ENCODE measurements at regions of chr18 and their contacts with region 1.

Region 1: GRCh38 chr18:3806656-3807055 is 356.7 kb downstream of the TGIF1 start:
- DNase-seq: no peak
- ATAC-seq: no peak
- H3K4me3 ChIP-seq: no peak overlapping the region
- H3K4me3 Mint-ChIP-seq: no peak overlapping the region
- H3K27ac ChIP-seq: no peak overlapping the region
- H3K27ac Mint-ChIP-seq: no peak overlapping the region
- H3K4me1 ChIP-seq: no peaks in the 10 kb centered on the region
- H3K4me1 Mint-ChIP-seq: no peaks in the 10 kb centered on the region
- H3K27me3 ChIP-seq: no peaks in the 10 kb centered on the region
- H3K27me3 Mint-ChIP-seq: peaks cover 3% of the 10 kb centered on the region
- CTCF ChIP-seq: no peak

Region 2: GRCh38 chr18:1891626-1892025 is 1915.0 kb before region 1 on chr18:
- CTCF ChIA-PET with region 1: no interaction called
- POLR2A ChIA-PET with region 1: no interaction called
- intact Hi-C with region 1: loop called in 1 of 2 experiments (anchors 10 kb)
- DNase-seq: no peak
- ATAC-seq: no peak
- H3K4me3 ChIP-seq: no peak overlapping the region
- H3K4me3 Mint-ChIP-seq: no peak overlapping the region
- H3K27ac ChIP-seq: no peak overlapping the region
- H3K27ac Mint-ChIP-seq: no peak overlapping the region
- H3K4me1 ChIP-seq: no peaks in the 10 kb centered on the region
- H3K4me1 Mint-ChIP-seq: no peaks in the 10 kb centered on the region
- H3K27me3 ChIP-seq: no peaks in the 10 kb centered on the region
- H3K27me3 Mint-ChIP-seq: no peaks in the 10 kb centered on the region
- CTCF ChIP-seq: no peak

Region 3: GRCh38 chr18:3710712-3711269 is 95.9 kb before region 1 on chr18:
- CTCF ChIA-PET with region 1: no interaction called
- POLR2A ChIA-PET with region 1: no interaction called
- intact Hi-C with region 1: no loop called
- DNase-seq: no peak
- ATAC-seq: no peak
- H3K4me3 ChIP-seq: no peak overlapping the region
- H3K4me3 Mint-ChIP-seq: no peak overlapping the region
- H3K27ac ChIP-seq: no peak overlapping the region
- H3K27ac Mint-ChIP-seq: no peak overlapping the region
- H3K4me1 ChIP-seq: no peaks in the 10 kb centered on the region
- H3K4me1 Mint-ChIP-seq: peaks cover 8% of the 10 kb centered on the region
- H3K27me3 ChIP-seq: no peaks in the 10 kb centered on the region
- H3K27me3 Mint-ChIP-seq: peaks cover 29% of the 10 kb centered on the region
- CTCF ChIP-seq: no peak